Left ventricle myocardium inferior (tissue), 1 donor: ENCODE measurements at regions of chr2 and their contacts with region 1.

Region 1: DNA sequence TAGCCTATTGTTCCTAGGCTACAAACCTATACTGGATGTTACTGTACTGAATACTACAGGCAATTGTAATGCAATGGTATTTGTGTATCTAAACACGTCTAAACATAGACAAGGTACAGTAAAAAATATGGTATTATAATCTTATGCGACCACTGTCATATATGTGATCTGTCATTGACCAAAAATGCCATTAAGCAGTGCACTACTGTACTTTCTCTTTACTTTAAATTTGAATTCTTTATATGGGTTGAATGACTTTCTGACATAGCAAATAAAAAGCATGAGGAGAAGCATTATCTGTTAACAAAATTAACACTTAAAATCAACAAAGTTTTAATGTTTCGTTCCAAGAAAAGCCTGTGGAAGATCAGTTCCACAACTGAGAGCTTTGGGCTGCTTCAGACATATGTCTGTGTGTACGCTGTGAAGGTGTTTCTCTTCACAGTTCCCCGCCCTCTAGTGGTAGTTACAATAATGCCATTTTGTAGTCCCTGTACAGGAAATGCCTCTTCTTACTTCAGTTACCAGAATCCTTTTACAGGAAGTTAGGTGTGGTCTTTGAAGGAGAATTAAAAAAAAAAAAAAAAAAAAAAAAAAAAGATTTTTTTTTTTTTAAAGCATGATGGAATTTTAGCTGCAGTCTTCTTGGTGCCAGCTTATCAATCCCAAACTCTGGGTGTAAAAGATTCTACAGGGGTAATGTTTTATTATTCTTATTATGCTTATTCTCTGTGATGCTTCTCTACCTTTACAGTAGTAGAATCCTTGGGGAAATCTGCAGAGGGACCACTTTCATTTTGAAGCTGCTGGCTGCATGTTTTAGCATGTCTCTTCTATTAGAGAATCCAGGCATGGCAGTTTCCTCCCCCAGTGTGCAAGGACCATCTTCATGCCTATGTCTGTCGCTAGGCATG is 54.5 kb downstream of the SCN2A start:
- DNase-seq: no peak
- H3K4me3 ChIP-seq: no peak overlapping the region
- H3K27ac ChIP-seq: no peak overlapping the region
- H3K4me1 ChIP-seq: peaks cover 3% of the 10 kb centered on the region
- H3K27me3 ChIP-seq: no peaks in the 10 kb centered on the region
- CTCF ChIP-seq: peak; percentile 80

Region 2: GRCh38 chr2:165239230-165239629 is 54.5 kb before region 1 on chr2 and contains the start of gene SCN2A:
- intact Hi-C with region 1: loop called (anchors 10 kb)
- DNase-seq: no peak
- H3K4me3 ChIP-seq: no peak within 1 kb of the TSS
- H3K27ac ChIP-seq: no peak within 1 kb of the TSS
- H3K4me1 ChIP-seq: no peaks in the 10 kb centered on the region
- H3K27me3 ChIP-seq: peaks cover 5% of the 10 kb centered on the region
- CTCF ChIP-seq: peak; percentile 78
- total RNA-seq, gene SCN2A: 0.08 TPM

Region 3: GRCh38 chr2:165833158-165833557 is 539.5 kb after region 1 on chr2:
- intact Hi-C with region 1: no loop called
- DNase-seq: no peak
- H3K4me3 ChIP-seq: no peak overlapping the region
- H3K27ac ChIP-seq: no peak overlapping the region
- H3K4me1 ChIP-seq: no peaks in the 10 kb centered on the region
- H3K27me3 ChIP-seq: no peaks in the 10 kb centered on the region
- CTCF ChIP-seq: no peak